ENCODE measurements at regions of chr11 and their contacts with region 1.

Region 1: GRCh38 chr11:109914809-109915653 is 178.2 kb upstream of the ZC3H12C start:
- DNase-seq: no peak
- H3K4me3 Mint-ChIP-seq: no peak overlapping the region
- H3K27ac Mint-ChIP-seq: no peak overlapping the region
- H3K4me1 Mint-ChIP-seq: peaks cover 16% of the 10 kb centered on the region
- H3K27me3 Mint-ChIP-seq: no peaks in the 10 kb centered on the region
- CTCF ChIP-seq: no peak

Region 2: GRCh38 chr11:108994887-108995286 is 920.1 kb before region 1 on chr11:
- CTCF ChIA-PET with region 1: interaction called, 13 read pairs
- intact Hi-C with region 1: no loop called
- DNase-seq: no peak
- H3K4me3 Mint-ChIP-seq: no peak overlapping the region
- H3K27ac Mint-ChIP-seq: no peak overlapping the region
- H3K4me1 Mint-ChIP-seq: no peaks in the 10 kb centered on the region
- H3K27me3 Mint-ChIP-seq: no peaks in the 10 kb centered on the region
- CTCF ChIP-seq: no peak